ENCODE measurements at regions of chr2 and their contacts with region 1.

Region 1: GRCh38 chr2:60998628-60999545 is 18.6 kb upstream of the PEX13 start:
- DNase-seq: peak; percentile 62
- ATAC-seq: peak; percentile 64
- H3K4me3 ChIP-seq: no peak overlapping the region
- H3K27ac ChIP-seq: no peak overlapping the region
- H3K4me1 ChIP-seq: no peaks in the 10 kb centered on the region
- H3K27me3 ChIP-seq: no peaks in the 10 kb centered on the region
- CTCF ChIP-seq: peak; percentile 71
- EP300 ChIP-seq: no peak
- POLR2A ChIP-seq: no peak
- RAD21 ChIP-seq: peak; percentile 56

Region 2: DNA sequence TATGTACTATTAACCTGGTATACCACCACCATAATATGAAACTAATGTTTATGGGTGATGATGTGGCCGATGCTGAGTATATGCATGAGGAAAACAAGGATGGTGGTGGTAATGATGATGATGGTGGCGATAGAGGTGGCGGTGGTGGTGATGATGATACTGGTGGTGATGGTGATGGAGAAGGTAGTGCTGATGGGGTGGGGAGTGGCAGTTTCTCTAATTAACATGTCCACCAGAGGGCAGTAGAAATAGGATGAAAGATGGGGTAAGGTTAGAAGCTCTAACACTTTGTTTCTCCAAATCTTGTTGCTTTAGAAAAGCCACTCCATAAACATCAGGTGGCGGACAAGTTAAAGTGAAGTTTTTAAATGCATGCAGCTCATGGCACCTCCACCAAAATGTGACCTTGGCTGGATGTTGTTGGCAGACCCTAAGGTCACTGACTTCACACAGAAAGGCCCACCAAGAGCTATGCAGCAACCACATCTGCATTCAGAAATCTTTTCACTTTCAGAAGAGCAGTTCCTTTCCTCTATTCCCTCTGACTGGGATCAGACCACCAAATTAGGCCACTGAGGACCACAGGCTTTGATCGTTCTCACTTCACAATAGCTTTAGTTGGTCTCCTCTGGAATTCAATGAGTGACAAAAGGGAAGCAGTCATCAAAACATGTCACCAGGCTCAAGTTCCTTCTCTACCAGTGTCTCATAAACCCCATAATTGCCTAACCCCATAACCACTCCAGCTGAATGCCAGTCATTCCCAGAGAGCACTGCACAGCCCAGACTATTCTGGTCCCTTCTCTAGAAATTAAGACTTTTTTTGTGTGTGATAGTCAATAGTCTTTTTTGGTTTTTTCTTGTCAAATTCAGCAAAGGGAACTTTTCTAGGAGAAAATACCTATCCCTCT is 437.9 kb before region 1 on chr2:
- CTCF ChIA-PET with region 1: no interaction called
- POLR2A ChIA-PET with region 1: no interaction called
- in situ Hi-C with region 1: no loop called
- intact Hi-C with region 1: loop called (anchors 5 kb)
- DNase-seq: peak; percentile 36
- ATAC-seq: peak; percentile 93
- H3K4me3 ChIP-seq: no peak overlapping the region
- H3K27ac ChIP-seq: no peak overlapping the region
- H3K4me1 ChIP-seq: no peaks in the 10 kb centered on the region
- H3K27me3 ChIP-seq: peaks cover 0 to 16% of the 10 kb centered on the region in 2 experiments; a peak in 3 of 5 replicates
- CTCF ChIP-seq: peak; percentile 52
- EP300 ChIP-seq: no peak
- POLR2A ChIP-seq: no peak
- RAD21 ChIP-seq: no peak

Region 3: DNA sequence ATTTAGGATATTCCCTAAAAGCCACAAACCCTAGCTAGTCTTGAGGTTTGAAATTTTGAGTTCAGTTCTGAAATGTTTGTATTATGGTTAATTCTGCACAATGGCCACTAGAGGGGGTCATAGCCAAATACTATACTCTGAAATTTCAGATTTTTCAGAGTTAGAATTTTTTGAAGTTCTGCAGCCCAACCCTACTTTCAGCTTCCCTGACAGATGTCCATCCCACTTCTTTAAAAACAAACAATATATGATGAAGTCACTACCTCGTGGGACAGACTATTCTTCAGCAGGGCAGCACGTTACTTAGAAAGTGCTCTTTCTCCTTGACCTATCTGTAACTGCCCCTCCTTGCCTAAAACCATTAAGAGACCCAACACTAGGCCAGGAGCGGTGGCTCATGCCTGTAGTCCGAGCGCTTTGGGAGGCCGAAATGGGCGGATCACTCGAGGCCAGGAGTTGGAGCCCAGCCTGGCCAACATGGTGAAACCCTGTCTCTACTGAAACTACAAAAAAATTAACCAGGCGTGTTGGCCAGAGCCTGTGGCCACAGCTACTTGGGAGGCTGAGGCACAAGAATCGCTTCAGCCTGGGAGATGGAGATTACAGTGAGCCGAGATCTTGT is 291.0 kb before region 1 on chr2:
- CTCF ChIA-PET with region 1: interaction called, 26 read pairs
- POLR2A ChIA-PET with region 1: interaction called, 3 read pairs
- in situ Hi-C with region 1: loop called (anchors 5 kb)
- intact Hi-C with region 1: loop called (anchors 1 kb)
- DNase-seq: peak; percentile 49
- ATAC-seq: peak; percentile 77
- H3K4me3 ChIP-seq: no peak overlapping the region; a peak in 1 of 6 replicates
- H3K27ac ChIP-seq: no peak overlapping the region
- H3K4me1 ChIP-seq: peaks cover 6% of the 10 kb centered on the region
- H3K27me3 ChIP-seq: peaks cover 1 to 5% of the 10 kb centered on the region in 2 experiments; a peak in 1 of 5 replicates
- CTCF ChIP-seq: peak; percentile 68
- EP300 ChIP-seq: no peak
- POLR2A ChIP-seq: no peak
- RAD21 ChIP-seq: peak; percentile 55

Region 4: GRCh38 chr2:60794277-60794863 is 204.5 kb before region 1 on chr2:
- CTCF ChIA-PET with region 1: interaction called, 15 read pairs
- POLR2A ChIA-PET with region 1: no interaction called
- in situ Hi-C with region 1: no loop called
- intact Hi-C with region 1: loop called (anchors 1 kb)
- DNase-seq: peak; percentile 16
- ATAC-seq: no peak
- H3K4me3 ChIP-seq: no peak overlapping the region
- H3K27ac ChIP-seq: no peak overlapping the region
- H3K4me1 ChIP-seq: no peaks in the 10 kb centered on the region
- H3K27me3 ChIP-seq: no peaks in the 10 kb centered on the region
- CTCF ChIP-seq: peak; percentile 55
- EP300 ChIP-seq: no peak
- POLR2A ChIP-seq: no peak
- RAD21 ChIP-seq: no peak

Region 5: GRCh38 chr2:60806988-60807681 is 191.8 kb before region 1 on chr2:
- CTCF ChIA-PET with region 1: interaction called, 3 read pairs
- POLR2A ChIA-PET with region 1: no interaction called
- in situ Hi-C with region 1: loop called (anchors 5 kb)
- intact Hi-C with region 1: no loop called
- DNase-seq: no peak
- ATAC-seq: peak; percentile 28
- H3K4me3 ChIP-seq: no peak overlapping the region
- H3K27ac ChIP-seq: no peak overlapping the region
- H3K4me1 ChIP-seq: peaks cover 35% of the 10 kb centered on the region
- H3K27me3 ChIP-seq: peaks cover 0 to 2% of the 10 kb centered on the region in 2 experiments; a peak in 1 of 5 replicates
- CTCF ChIP-seq: no peak
- EP300 ChIP-seq: no peak
- POLR2A ChIP-seq: no peak
- RAD21 ChIP-seq: no peak

Region 6: DNA sequence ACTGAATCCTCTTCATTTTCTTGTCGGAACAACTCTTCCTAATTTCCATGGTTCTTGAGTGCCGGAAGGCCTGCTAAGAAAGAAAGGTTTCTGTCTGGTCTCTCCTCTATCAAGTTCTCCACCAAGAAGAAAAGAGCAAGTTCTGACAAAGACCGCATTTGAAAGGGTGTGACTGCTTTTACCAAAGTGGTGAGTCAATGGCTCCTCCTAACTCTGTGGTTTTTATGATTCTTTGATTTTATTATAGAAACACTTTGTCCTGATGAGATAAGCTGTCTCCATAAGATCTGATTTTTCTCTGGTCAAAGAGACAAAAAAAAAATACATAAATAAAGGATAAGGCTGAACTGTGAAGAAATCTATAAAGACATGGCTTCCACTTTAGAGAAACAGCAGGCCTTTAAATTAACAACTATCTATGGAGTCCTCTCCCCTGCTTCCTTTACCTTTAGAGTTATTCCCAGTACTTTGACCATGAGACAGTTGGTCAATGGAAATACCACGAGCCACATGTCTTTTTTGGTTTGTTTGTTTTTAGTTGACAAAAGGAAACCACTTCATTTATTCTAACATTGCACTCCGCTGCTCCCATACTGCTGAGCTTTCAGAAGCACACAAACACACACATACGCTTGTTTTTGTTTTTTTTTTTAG is 49.8 kb before region 1 on chr2:
- CTCF ChIA-PET with region 1: no interaction called
- POLR2A ChIA-PET with region 1: no interaction called
- in situ Hi-C with region 1: no loop called
- intact Hi-C with region 1: no loop called
- DNase-seq: no peak
- ATAC-seq: no peak
- H3K4me3 ChIP-seq: no peak overlapping the region
- H3K27ac ChIP-seq: no peak overlapping the region
- H3K4me1 ChIP-seq: no peaks in the 10 kb centered on the region
- H3K27me3 ChIP-seq: no peaks in the 10 kb centered on the region
- CTCF ChIP-seq: no peak
- EP300 ChIP-seq: no peak
- POLR2A ChIP-seq: no peak
- RAD21 ChIP-seq: no peak

Measured in HepG2 (cell line).